ENCODE measurements at regions of chr4 and their contacts with region 1.

Region 1: GRCh38 chr4:81040012-81040659 is 9.6 kb downstream of the BMP3 start:
- DNase-seq: peak; percentile 62
- ATAC-seq: no peak
- H3K4me3 ChIP-seq: no peak overlapping the region
- H3K4me3 Mint-ChIP-seq: no peak overlapping the region
- H3K27ac ChIP-seq: no peak overlapping the region
- H3K27ac Mint-ChIP-seq: no peak overlapping the region
- H3K4me1 ChIP-seq: peaks cover 5 to 10% of the 10 kb centered on the region in 2 donors
- H3K4me1 Mint-ChIP-seq: peaks cover 14% of the 10 kb centered on the region
- H3K27me3 ChIP-seq: no peaks in the 10 kb centered on the region
- H3K27me3 Mint-ChIP-seq: peaks cover 10% of the 10 kb centered on the region
- CTCF ChIP-seq: peak; percentile 79

Region 2: GRCh38 chr4:80619070-80619674 is 421.0 kb before region 1 on chr4:
- CTCF ChIA-PET with region 1: interaction called, 5 read pairs
- POLR2A ChIA-PET with region 1: no interaction called
- intact Hi-C with region 1: loop called (anchors 2 kb)
- DNase-seq: peak; percentile 27
- ATAC-seq: no peak
- H3K4me3 ChIP-seq: no peak overlapping the region
- H3K4me3 Mint-ChIP-seq: no peak overlapping the region
- H3K27ac ChIP-seq: no peak overlapping the region
- H3K27ac Mint-ChIP-seq: no peak overlapping the region
- H3K4me1 ChIP-seq: peaks cover 0 to 2% of the 10 kb centered on the region in 2 donors
- H3K4me1 Mint-ChIP-seq: peaks cover 2% of the 10 kb centered on the region
- H3K27me3 ChIP-seq: peaks cover 0 to 3% (median 0%) of the 10 kb centered on the region in 4 experiments
- H3K27me3 Mint-ChIP-seq: no peaks in the 10 kb centered on the region
- CTCF ChIP-seq: peak; percentile 49

Region 3: DNA sequence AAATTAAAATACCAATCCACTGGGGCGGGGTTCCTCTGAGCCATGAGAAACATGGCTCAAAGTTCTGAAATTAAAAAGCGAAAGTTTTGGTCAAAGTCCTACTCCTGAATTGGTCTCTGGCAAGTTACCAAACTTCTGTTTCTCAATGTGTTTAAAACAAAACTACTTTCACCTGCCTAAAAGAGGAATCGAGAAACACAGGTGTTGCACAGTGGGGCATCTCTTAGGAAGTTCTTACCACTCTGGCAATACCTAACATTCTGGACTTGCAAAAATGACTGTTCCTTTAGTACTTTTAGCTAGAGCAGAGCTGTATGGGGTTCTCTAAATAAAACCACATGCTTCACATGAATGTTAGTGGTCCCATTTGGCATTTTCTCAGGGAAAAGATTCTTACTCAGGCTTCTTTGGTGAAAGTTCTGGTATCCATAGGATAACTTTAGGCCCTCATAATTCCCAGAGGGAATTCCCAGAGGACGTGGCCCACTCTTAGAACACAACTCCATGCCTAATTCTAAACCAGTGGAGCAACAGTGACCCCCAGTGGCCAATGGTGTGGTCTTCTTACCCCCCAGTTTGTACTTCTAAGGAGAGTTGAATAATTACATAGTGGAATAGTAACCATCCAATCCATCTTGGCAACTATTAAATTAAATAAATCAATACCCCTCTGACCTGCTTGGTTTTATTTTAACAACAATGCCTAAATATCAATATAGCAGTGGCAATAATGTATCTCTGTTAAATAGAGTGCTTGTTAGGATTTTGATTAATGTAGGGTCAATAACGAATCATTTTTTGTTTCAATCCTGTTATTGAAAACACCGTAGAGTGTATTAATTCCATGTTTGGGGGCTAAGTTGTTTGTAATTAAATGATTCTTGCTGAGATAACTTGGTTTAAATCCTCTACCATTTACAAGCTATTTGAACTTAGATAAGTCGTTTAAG is 12.3 kb after region 1 on chr4:
- CTCF ChIA-PET with region 1: interaction called, 82 read pairs
- POLR2A ChIA-PET with region 1: no interaction called
- intact Hi-C with region 1: no loop called
- DNase-seq: peak; percentile 72
- ATAC-seq: peak; percentile 79
- H3K4me3 ChIP-seq: no peak overlapping the region
- H3K4me3 Mint-ChIP-seq: no peak overlapping the region
- H3K27ac ChIP-seq: peak overlapping the region; percentile 26 to 36
- H3K27ac Mint-ChIP-seq: peak overlapping the region; percentile 43
- H3K4me1 ChIP-seq: peaks cover 8 to 14% of the 10 kb centered on the region in 2 donors
- H3K4me1 Mint-ChIP-seq: peaks cover 12% of the 10 kb centered on the region
- H3K27me3 ChIP-seq: no peaks in the 10 kb centered on the region
- H3K27me3 Mint-ChIP-seq: peaks cover 5% of the 10 kb centered on the region
- CTCF ChIP-seq: peak; percentile 90

Region 4: GRCh38 chr4:81512757-81513501 is 472.8 kb after region 1 on chr4:
- CTCF ChIA-PET with region 1: no interaction called
- POLR2A ChIA-PET with region 1: no interaction called
- intact Hi-C with region 1: no loop called
- DNase-seq: peak; percentile 66
- ATAC-seq: peak; percentile 70
- H3K4me3 ChIP-seq: no peak overlapping the region
- H3K4me3 Mint-ChIP-seq: peak overlapping the region; percentile 40
- H3K27ac ChIP-seq: peak overlapping the region; percentile 65 to 78
- H3K27ac Mint-ChIP-seq: peak overlapping the region; percentile 56
- H3K4me1 ChIP-seq: peaks cover 34 to 59% of the 10 kb centered on the region in 2 donors
- H3K4me1 Mint-ChIP-seq: peaks cover 65% of the 10 kb centered on the region
- H3K27me3 ChIP-seq: no peaks in the 10 kb centered on the region
- H3K27me3 Mint-ChIP-seq: no peaks in the 10 kb centered on the region
- CTCF ChIP-seq: no peak